MCF 10A (cell line): ENCODE measurements at regions of chr17 and their contacts with region 1.

Region 1: DNA sequence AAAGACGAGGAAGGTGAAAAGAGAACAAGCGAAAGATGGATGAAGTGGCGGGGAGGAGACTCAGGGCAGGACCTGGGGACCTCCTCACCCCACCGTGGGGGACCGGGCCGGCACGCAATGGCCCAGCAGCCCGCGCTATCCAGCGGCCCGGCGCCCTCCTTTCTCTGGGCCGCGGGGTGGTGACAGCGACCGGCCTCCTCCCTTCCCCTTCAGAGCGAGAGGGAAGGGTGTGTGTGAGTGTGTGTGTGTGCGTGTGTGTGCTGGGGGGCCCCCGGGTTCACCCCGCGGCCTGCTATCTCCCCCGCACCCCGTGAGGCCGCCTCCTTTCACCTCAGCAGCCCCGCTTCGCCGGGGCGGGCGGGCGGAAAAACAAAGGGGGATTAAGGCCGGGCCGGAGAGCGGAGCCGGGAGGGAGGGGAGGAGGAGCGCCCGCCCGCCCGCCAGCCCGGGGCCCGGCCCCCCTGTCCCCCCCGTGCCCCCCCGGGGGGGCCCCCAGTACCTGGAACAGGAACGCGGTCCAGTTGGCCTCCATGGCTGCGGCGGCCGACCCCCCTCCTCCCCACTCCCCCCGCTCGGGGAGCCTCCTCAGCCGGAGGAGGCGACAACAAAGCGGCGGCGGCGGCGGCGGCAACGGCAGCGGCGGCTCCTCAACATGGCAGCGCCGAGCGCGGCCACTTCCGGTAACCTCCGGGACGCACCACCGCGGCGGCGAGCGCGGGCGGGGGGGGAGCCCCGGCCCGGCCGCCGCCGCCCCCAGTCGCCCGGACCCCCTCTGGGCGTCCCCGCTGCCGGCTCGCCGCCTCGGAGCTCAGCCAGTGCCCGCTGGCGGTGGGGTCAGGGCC is at the start of gene VEZF1:
- DNase-seq: peak; percentile 66
- H3K4me3 Mint-ChIP-seq: peak within 1 kb of the TSS; percentile 99
- H3K27ac Mint-ChIP-seq: peak within 1 kb of the TSS; percentile 95
- H3K4me1 Mint-ChIP-seq: peaks cover 34% of the 10 kb centered on the region
- H3K27me3 Mint-ChIP-seq: no peaks in the 10 kb centered on the region
- CTCF ChIP-seq: no peak
- total RNA-seq, gene VEZF1: 66.8 and 69.1 TPM in 2 replicates

Region 2: DNA sequence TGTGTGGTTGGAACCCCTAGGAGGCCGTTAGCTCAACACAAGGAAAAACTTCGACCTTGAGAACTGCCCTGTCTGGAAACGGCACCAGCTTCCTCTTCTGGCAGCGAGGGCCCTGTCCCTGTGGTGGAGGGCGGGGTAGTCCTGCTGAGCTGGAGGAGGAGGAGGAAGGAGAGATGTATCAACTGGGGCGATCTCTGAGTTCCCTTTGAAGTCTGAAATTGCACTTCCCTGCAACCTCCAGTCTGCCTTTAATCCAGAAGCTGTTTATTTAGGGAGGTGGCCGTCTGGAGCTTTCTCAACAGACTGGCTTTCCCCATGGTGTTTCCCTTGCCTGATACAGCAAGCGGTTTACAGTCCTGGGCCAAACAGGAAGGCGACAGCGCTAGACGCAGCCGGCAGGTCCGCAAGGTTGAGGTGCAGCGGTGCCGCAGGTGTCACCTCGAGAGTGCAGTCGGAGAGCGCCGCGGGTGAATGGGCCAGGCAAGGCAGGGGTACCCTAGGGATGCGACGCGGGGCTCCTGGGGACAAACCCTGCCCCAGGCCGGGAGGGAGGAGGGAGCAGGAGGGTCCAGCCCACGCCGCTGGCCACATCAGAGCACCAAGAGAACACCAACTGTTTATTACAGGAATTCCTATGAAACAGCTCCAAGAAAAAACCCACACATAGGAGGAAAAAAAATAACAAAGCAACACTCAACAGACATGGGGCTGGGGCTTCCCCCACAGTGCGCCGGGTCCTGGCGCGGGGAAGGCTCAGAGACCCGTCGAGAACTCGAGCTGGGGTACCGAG is 126.6 kb before region 1 on chr17:
- CTCF ChIA-PET with region 1: interaction called, 418 read pairs
- POLR2A ChIA-PET with region 1: interaction called, 26 read pairs
- intact Hi-C with region 1: loop called (anchors 2 kb)
- DNase-seq: no peak
- H3K4me3 Mint-ChIP-seq: no peak overlapping the region
- H3K27ac Mint-ChIP-seq: no peak overlapping the region
- H3K4me1 Mint-ChIP-seq: peaks cover 14% of the 10 kb centered on the region
- H3K27me3 Mint-ChIP-seq: no peaks in the 10 kb centered on the region
- CTCF ChIP-seq: no peak

Region 3: GRCh38 chr17:57875309-57876115 is 112.3 kb before region 1 on chr17:
- CTCF ChIA-PET with region 1: interaction called, 7 read pairs
- POLR2A ChIA-PET with region 1: interaction called, 40 read pairs
- intact Hi-C with region 1: no loop called
- DNase-seq: peak; percentile 94
- H3K4me3 Mint-ChIP-seq: peak overlapping the region; percentile 41
- H3K27ac Mint-ChIP-seq: peak overlapping the region; percentile 51
- H3K4me1 Mint-ChIP-seq: peaks cover 45% of the 10 kb centered on the region
- H3K27me3 Mint-ChIP-seq: no peaks in the 10 kb centered on the region
- CTCF ChIP-seq: peak; percentile 52

Region 4: DNA sequence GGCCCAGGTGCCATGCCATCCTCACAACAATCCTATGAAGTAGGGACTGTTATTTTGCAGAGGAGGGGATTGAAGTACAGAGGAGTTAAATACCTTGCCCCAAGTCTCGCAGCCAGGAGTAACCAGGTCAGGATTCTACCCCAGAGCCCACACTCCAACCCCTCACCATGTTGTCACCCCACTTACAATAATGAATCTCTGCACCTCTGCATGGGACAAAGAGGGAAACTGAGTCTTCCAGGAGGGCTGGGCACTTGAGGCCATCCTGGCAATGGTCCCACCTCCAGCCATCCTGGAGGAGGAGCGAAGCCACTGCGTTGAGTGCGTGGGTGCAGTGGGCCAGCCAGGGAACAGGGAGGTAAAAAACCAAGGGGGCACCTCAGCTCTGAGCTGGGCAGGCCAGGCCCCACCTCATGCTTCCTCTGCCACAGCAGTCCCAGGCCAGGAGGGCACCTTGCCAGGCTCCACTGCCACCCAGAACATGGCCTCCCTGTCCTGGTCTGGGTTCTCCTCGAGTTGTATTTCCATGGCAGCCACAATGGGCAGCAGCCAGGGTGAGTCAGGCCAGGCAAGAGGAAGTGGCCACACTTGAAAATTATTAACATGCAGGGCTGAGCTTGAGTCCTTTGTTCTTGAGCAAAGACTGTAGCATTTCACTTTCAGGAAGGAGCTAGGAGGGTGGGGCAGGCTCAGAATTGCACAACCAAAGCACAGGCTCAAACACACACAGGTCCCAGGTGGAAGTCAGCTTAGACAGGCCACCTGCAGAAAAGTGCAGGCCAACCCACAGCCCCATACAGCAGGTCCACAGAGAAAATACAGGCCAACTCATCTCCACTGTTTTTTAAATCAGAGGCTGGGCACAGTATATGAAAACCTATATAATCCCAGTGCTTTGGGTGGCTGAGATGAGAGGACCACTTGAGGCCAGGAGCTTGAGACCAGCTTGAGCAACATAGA is 84.7 kb before region 1 on chr17:
- CTCF ChIA-PET with region 1: interaction called, 8 read pairs
- POLR2A ChIA-PET with region 1: interaction called, 29 read pairs
- intact Hi-C with region 1: no loop called
- DNase-seq: peak; percentile 95
- H3K4me3 Mint-ChIP-seq: peak overlapping the region; percentile 22
- H3K27ac Mint-ChIP-seq: peak overlapping the region; percentile 23
- H3K4me1 Mint-ChIP-seq: peaks cover 49% of the 10 kb centered on the region
- H3K27me3 Mint-ChIP-seq: no peaks in the 10 kb centered on the region
- CTCF ChIP-seq: no peak

Region 5: DNA sequence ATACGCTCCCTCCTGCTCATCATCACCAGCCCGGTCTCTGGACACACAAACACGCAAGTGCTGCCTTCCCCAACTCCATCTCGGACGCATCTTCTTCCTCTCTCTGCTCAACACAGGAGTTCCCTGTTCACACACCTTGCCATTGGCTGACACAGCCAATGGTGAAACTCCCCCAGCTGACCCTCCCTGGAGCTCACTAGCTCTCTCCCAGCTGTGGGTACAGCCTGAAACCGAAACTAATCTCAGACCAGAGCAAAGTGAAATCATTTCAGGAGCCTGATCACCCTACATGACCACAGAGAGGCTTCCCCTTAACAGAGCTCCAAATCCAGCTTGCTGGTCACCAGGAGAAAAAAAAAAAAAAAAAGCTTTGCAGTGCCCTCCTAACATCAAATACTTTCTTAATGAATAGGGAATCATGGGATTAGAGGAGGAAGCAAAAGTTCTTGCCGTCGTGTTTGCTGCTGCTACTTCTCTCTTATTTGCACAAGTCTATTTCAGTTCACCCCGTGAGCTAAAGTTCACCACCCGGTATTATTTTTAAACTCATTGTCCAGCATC is 40.9 kb before region 1 on chr17:
- CTCF ChIA-PET with region 1: interaction called, 5 read pairs
- POLR2A ChIA-PET with region 1: interaction called, 55 read pairs
- intact Hi-C with region 1: loop called (anchors 2 kb)
- DNase-seq: peak; percentile 56
- H3K4me3 Mint-ChIP-seq: peak overlapping the region; percentile 68
- H3K27ac Mint-ChIP-seq: peak overlapping the region; percentile 49
- H3K4me1 Mint-ChIP-seq: peaks cover 46% of the 10 kb centered on the region
- H3K27me3 Mint-ChIP-seq: no peaks in the 10 kb centered on the region
- CTCF ChIP-seq: no peak

Region 6: GRCh38 chr17:58006924-58007780 is 19.4 kb after region 1 on chr17 and contains the start of gene SRSF1:
- CTCF ChIA-PET with region 1: interaction called, 4 read pairs
- POLR2A ChIA-PET with region 1: interaction called, 62 read pairs
- intact Hi-C with region 1: no loop called
- DNase-seq: peak; percentile 97
- H3K4me3 Mint-ChIP-seq: peak within 1 kb of the TSS; percentile 99
- H3K27ac Mint-ChIP-seq: peak within 1 kb of the TSS; percentile 99
- H3K4me1 Mint-ChIP-seq: peaks cover 27% of the 10 kb centered on the region
- H3K27me3 Mint-ChIP-seq: no peaks in the 10 kb centered on the region
- CTCF ChIP-seq: no peak
- total RNA-seq, gene SRSF1: 381 and 493 TPM in 2 replicates